Heart left ventricle (tissue), 16 donors: ENCODE measurements at regions of chr17 and their contacts with region 1.

Region 1: DNA sequence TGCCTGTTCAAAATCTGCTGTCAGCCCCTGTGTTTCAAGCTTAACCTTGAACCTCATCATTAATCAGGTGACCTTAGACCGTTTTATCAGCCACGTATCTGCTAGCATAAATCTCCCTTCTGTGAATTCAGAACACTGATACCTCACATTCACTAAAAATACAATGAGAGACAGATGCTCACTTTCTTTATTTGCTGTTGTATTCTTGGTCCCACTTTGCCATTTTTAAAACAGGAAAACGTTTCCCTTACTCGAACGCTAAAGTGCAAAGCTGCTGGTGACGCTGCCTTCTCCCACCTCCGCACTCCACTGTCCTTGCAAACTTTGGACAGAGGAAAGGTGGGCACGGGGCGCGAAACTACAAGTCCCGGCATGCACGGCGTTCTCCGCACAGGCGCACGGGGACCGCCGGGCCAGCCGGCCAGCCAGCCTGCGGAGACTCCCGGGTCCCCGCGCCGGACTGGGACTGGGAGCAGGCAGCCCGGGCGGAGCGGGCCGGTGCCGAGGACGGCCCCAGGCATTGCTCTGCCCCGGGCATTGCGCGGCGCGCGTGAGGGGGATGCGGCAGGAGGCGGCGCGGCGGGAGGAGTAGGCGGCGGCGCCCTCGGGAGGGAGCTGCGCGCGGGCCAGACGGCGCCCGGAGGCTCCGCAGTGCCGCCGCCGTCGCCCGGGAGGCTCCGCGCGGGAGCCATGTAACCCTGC is at the start of gene ARHGAP44:
- DNase-seq: peak; percentile 62 to 84 (median 66)
- ATAC-seq: peak; percentile 78 to 98 (median 96)
- H3K4me3 ChIP-seq: peak within 1 kb of the TSS; percentile 63 to 92 (median 74)
- H3K27ac ChIP-seq: peak within 1 kb of the TSS in 10 of 12 donors; percentile 20 to 78 (median 58)
- H3K4me1 ChIP-seq: peaks cover 0 to 9% (median 2%) of the 10 kb centered on the region in 12 donors
- H3K27me3 ChIP-seq: peaks cover 0 to 13% (median 0%) of the 10 kb centered on the region in 9 donors
- CTCF ChIP-seq: peak in 2 of 12 donors; percentile 8 to 16
- POLR2A ChIP-seq: peak in 1 of 2 donors; percentile 63
- total RNA-seq, gene ARHGAP44: 6.0 to 15.7 (median 8.7) TPM

Region 2: DNA sequence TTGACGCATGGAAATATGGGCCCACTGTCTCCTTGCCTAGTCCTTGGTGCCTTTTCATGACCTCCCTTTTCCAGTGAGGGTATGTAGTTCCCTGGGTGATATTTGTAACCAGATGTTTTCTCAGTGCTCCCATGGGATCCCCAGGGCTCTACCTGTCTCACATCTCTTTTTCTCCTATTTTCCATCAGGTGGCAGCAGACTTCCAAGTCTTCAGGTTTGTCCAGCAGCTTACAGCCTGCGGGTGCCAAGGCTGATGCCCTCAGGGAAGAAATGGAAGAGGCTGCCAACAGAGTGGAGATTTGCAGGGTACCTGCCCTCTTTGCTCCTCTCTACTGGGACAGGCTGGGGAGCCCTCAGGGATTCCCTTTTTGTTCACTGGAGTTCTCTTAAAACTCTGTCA is 139.5 kb after region 1 on chr17:
- intact Hi-C with region 1: loop called in 1 of 10 experiments (anchors 10 kb)
- DNase-seq: no peak
- ATAC-seq: peak in 2 of 4 donors; percentile 31 to 43
- H3K4me3 ChIP-seq: no peak overlapping the region
- H3K27ac ChIP-seq: peak overlapping the region in 4 of 12 donors; percentile 14 to 66 (median 40)
- H3K4me1 ChIP-seq: peaks cover 0 to 24% (median 2%) of the 10 kb centered on the region in 12 donors
- H3K27me3 ChIP-seq: no peaks in the 10 kb centered on the region
- CTCF ChIP-seq: peak in 6 of 12 donors; percentile 10 to 29 (median 18)
- POLR2A ChIP-seq: no peak

Region 3: DNA sequence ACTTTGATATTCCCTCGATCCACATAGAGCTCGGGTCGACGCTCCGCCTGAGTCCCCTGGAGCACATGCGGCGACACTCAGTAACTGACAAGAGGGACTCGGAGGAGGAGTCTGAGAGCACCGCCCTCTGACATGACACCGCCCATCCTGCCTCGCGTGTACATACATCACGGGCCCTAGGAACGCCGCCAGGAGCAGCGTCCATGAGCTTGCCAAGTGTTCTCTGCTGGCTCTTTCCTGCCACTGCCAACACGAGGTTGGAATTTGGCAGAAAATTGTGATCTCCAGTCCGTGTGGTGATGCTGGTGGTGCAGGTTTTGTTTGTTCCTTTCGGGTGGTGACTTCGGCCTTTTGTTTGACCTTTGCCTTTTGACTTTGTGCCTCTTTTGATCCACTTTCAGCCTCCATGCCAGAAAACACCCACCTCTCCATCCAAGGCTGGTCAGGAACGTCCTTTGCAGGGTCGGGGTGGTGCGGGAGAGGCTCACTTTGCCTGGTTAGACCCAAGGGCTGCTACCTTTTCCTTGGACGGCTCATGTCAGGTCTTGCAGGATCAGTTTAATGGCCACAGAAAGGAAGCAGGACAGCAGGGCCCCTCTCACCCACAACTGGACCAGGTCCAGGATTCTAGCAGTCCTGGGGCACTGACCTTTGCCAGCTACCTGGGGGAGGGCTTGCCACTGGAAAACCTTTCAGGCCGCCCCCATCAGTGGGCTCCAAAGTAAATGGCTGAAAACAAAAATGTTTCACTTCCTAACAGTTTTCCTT is 201.0 kb after region 1 on chr17:
- intact Hi-C with region 1: loop called in 1 of 10 experiments (anchors 10 kb)
- DNase-seq: peak; percentile 67 to 84 (median 83)
- ATAC-seq: peak; percentile 80 to 85 (median 84)
- H3K4me3 ChIP-seq: no peak overlapping the region
- H3K27ac ChIP-seq: peak overlapping the region in 8 of 12 donors; percentile 5 to 71 (median 34)
- H3K4me1 ChIP-seq: peaks cover 4 to 32% (median 12%) of the 10 kb centered on the region in 12 donors
- H3K27me3 ChIP-seq: no peaks in the 10 kb centered on the region
- CTCF ChIP-seq: no peak
- POLR2A ChIP-seq: no peak